Breast epithelium (tissue), 4 donors: ENCODE measurements at regions of chr10 and their contacts with region 1.

Region 1: DNA sequence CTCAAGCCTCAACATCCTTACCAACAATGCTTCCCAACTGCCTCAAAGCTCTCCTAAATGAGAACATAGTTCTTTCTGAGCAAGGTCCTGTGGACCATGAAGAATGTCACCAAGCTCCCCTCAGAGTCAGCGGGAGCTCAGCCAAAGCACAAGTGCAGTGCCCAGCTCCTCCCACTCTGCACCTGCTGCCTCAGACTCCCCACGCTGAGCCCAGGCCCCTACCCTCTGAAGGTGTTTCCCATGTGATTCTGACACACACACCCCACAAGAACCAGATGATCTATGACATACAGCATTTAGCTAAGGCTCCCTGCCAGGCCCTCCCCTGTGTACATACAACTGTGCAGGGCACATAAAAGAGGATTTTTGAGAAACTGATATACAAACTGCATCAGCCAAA is 19.2 kb downstream of the ERCC6 start:
- DNase-seq: no peak
- H3K4me3 ChIP-seq: no peak overlapping the region
- H3K27ac ChIP-seq: no peak overlapping the region
- H3K4me1 ChIP-seq: no peaks in the 10 kb centered on the region
- H3K27me3 ChIP-seq: no peaks in the 10 kb centered on the region
- CTCF ChIP-seq: no peak
- POLR2A ChIP-seq: no peak

Region 2: GRCh38 chr10:49398000-49398861 is 121.5 kb before region 1 on chr10:
- intact Hi-C with region 1: loop called (anchors 5 kb)
- DNase-seq: peak in 1 of 2 donors; percentile 61
- H3K4me3 ChIP-seq: peak overlapping the region in 2 of 3 donors; percentile 16 to 54
- H3K27ac ChIP-seq: no peak overlapping the region
- H3K4me1 ChIP-seq: no peaks in the 10 kb centered on the region
- H3K27me3 ChIP-seq: peaks cover 10 to 85% of the 10 kb centered on the region in 2 donors
- CTCF ChIP-seq: no peak
- POLR2A ChIP-seq: no peak